Caco-2 (cell line): ENCODE measurements at regions of chr22 and their contacts with region 1.

Region 1: DNA sequence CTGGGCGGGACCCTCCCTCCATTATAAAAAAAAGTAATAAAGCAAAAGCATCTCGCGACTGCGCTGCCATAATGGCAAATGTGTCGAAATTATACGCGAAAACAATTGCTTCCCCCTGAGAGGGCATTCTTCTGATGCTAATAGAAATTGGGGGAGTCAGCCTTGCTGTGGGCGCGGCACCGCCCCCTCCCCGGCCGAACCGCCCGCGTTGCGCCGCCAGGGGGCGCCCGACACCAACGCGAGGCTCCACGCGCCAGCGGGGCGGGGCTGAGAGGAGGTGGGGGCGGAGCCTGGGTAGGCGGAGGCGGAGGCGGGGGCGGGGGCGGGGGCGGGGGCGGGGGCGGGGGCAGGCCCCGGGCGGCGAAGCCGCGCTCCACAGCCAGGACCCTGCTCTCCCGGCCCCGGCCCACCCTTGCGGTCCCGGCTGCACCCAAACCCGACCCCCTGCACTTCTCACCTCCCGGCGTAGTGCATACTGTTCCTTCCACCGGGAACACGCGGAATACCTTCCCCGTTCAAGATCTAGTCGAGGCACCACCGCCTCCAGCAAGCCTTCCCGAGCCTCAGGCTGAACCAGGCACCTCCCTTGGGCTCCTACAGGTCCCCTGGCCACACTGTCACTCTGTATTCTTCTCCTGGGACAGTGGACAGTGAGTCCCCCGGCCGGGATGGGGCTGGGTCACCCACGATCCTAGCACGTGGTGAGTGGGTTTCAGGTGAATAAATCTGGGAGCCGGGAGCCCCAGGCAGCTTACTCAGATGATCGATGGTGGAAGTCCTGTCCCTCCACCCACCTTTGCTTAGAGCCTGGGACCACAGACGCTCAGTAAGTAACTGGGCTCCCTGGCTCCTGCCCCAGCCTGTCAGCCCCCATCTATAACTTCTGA is 15.5 kb upstream of the UPK3A start:
- DNase-seq: peak; percentile 76 to 94
- H3K4me3 ChIP-seq: peak overlapping the region; percentile 76
- H3K4me3 Mint-ChIP-seq: peak overlapping the region; percentile 95
- H3K27ac Mint-ChIP-seq: peak overlapping the region; percentile 95
- H3K4me1 ChIP-seq: peaks cover 42% of the 10 kb centered on the region
- H3K4me1 Mint-ChIP-seq: peaks cover 28% of the 10 kb centered on the region
- H3K27me3 ChIP-seq: no peaks in the 10 kb centered on the region
- H3K27me3 Mint-ChIP-seq: no peaks in the 10 kb centered on the region
- CTCF ChIP-seq: peak; percentile 51 to 88

Region 2: GRCh38 chr22:45302751-45303150 is 33.5 kb after region 1 on chr22:
- CTCF ChIA-PET with region 1: interaction called, 11 read pairs
- POLR2A ChIA-PET with region 1: interaction called, 8 read pairs
- intact Hi-C with region 1: loop called (anchors 1 kb)
- DNase-seq: no peak
- H3K4me3 ChIP-seq: no peak overlapping the region
- H3K4me3 Mint-ChIP-seq: no peak overlapping the region
- H3K27ac Mint-ChIP-seq: no peak overlapping the region
- H3K4me1 ChIP-seq: peaks cover 29% of the 10 kb centered on the region
- H3K4me1 Mint-ChIP-seq: peaks cover 22% of the 10 kb centered on the region
- H3K27me3 ChIP-seq: no peaks in the 10 kb centered on the region
- H3K27me3 Mint-ChIP-seq: no peaks in the 10 kb centered on the region
- CTCF ChIP-seq: no peak

Region 3: DNA sequence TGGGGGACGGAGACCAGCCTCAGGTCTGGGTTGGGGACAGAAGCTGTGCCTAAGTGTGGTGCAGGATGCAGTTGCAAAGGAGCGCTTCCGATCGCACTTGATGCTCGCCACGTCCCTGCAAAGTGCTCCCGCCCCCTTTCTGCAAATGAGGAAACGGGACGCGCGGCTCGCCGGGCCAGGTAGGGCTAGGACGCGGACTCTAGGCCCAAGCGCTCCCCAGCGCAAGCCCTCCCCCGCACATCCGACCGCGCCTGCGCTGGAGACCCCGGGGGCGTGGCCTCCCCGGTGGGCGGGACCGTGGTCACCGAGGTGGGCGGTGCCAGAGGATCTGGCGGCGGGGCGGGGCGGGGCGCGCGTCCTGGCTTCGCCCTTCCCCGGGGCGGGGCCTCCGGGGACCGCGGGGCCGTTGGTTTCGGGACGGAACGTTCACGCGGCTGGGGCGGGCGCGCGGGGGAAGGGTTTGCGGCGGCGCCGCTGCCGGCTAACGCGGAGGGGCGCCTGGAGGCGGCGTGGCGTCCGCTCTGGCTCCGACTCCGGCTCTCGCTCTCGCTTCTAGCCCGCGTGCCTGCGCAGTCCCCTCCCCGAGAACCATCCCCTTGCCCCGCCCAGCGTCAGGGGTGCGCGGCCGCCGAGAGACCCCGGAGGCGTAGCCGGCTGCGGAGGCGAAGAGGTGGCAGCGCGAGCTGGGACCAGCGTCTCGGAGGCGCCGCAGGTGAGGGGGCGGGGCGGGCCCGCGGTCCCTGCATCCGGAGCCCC is 40.4 kb after region 1 on chr22 and contains the start of gene FAM118A:
- CTCF ChIA-PET with region 1: interaction called, 8 read pairs
- POLR2A ChIA-PET with region 1: interaction called, 8 read pairs
- intact Hi-C with region 1: loop called (anchors 1 kb)
- DNase-seq: peak; percentile 95 to 98
- H3K4me3 ChIP-seq: peak within 1 kb of the TSS; percentile 73
- H3K4me3 Mint-ChIP-seq: peak within 1 kb of the TSS; percentile 81
- H3K27ac Mint-ChIP-seq: peak within 1 kb of the TSS; percentile 90
- H3K4me1 ChIP-seq: peaks cover 68% of the 10 kb centered on the region
- H3K4me1 Mint-ChIP-seq: peaks cover 61% of the 10 kb centered on the region
- H3K27me3 ChIP-seq: no peaks in the 10 kb centered on the region
- H3K27me3 Mint-ChIP-seq: no peaks in the 10 kb centered on the region
- CTCF ChIP-seq: no peak
- total RNA-seq, gene FAM118A: 120 and 131 TPM in 2 replicates